Posterior cingulate gyrus (tissue), 11 donors: ENCODE measurements at regions of chr9 and their contacts with region 1.

Region 1: GRCh38 chr9:98263482-98264357 is 8.3 kb upstream of the TBC1D2 start:
- DNase-seq: peak; percentile 58 to 98 (median 84)

Region 2: DNA sequence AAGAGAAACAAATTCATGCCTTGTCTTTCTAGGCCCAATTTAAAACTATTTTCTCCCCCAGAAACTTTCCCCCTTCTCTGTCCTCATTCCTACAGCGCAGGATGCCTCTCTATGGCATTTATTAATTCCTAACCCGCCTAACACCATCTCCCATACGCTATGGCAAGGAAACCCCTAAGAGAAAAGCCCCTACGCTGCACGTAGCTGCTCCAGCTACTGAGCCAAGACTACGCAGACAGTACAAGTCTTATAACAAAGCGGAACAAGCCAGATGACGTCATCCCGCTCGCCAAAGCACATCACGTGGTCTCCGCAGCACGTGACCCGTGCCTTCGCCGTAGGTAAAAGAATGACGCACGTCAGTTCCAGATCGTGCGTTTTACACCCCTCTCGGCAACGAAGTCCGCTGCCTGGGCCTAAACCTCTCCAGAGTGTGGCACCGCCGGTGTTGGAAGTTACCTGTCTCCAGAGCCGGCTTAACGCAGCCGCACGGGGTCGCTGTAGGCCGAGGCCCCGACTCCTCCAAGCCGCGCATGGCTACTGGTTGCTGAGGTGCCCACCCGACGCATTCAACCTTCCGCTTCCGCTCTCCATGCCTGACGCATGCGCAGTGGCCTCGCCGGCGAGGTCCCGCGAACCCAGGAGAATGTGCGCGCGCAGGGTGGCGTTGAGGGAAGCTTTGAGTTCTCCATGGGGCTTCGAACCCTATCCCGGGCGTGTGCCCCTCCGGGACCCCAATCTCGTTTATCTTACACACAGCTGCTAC is 341.6 kb before region 1 on chr9 and contains the start of gene TRMO:
- intact Hi-C with region 1: loop called (anchors 2 kb)
- DNase-seq: peak; percentile 92 to 99 (median 95)

Region 3: DNA sequence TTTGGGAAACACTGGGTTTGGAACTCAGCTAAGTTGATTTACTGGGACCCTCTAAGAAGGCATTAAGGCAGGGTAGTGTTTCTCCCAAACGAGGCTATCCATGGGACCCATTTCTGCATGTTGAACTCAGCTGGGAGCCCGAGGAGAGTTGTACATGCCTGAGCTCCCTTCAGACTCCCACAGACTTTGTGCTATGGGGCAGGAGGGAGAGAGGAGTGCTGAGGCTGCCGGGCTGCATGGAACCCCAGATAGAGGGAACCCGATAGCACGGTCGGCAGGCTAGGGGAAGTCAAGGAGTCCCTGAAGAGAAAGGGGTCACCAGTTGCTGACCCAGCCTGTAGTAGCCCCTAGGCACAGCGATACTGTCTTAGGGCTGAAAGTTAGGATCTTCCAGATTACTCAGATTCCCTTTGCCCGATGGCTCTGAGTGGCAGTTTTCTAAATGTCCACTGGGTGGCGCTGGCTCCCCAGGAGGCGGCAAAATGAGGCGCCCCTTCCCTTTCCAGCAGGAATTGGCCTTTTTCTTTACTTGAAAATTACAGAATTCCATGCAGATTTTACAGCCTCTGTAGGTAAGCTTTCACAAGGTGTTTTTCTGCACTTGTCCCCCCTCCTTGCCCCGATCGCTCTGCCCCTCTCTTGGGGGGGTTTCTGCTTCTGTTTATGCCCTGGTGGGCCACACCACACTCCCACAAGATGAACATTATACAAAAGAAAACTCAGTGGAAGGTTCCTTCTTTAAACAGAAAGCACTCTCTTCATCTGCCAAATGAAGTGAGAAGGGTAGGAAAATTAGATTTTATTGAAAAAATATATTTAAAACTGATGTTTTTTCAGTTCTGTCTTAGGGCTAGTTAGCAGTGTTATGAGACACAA is 189.4 kb before region 1 on chr9:
- intact Hi-C with region 1: loop called (anchors 2 kb)
- DNase-seq: peak; percentile 38 to 95 (median 78)

Region 4: GRCh38 chr9:98129451-98129881 is 134.3 kb before region 1 on chr9:
- intact Hi-C with region 1: no loop called
- DNase-seq: peak in 2 of 10 donors; percentile 38 to 79

Region 5: GRCh38 chr9:98207606-98208005 is 56.1 kb before region 1 on chr9:
- intact Hi-C with region 1: loop called (anchors 1 kb)
- DNase-seq: peak in 1 of 10 donors; percentile 26